ENCODE measurements at regions of chr1 and their contacts with region 1.

Region 1: GRCh38 chr1:27102707-27103491 is 52.0 kb downstream of the SLC9A1 start:
- DNase-seq: peak; percentile 87
- H3K4me3 Mint-ChIP-seq: no peak overlapping the region
- H3K27ac Mint-ChIP-seq: no peak overlapping the region
- H3K4me1 Mint-ChIP-seq: peaks cover 15% of the 10 kb centered on the region
- H3K27me3 Mint-ChIP-seq: no peaks in the 10 kb centered on the region

Region 2: GRCh38 chr1:27192039-27192529 is 89.2 kb after region 1 on chr1:
- CTCF ChIA-PET with region 1: interaction called, 51 read pairs
- POLR2A ChIA-PET with region 1: no interaction called
- intact Hi-C with region 1: no loop called
- DNase-seq: no peak
- H3K4me3 Mint-ChIP-seq: no peak overlapping the region
- H3K27ac Mint-ChIP-seq: no peak overlapping the region
- H3K4me1 Mint-ChIP-seq: no peaks in the 10 kb centered on the region
- H3K27me3 Mint-ChIP-seq: no peaks in the 10 kb centered on the region

Region 3: GRCh38 chr1:27201295-27201694 is 98.4 kb after region 1 on chr1:
- CTCF ChIA-PET with region 1: interaction called, 51 read pairs
- POLR2A ChIA-PET with region 1: no interaction called
- intact Hi-C with region 1: loop called (anchors 1 kb)
- DNase-seq: no peak
- H3K4me3 Mint-ChIP-seq: no peak overlapping the region
- H3K27ac Mint-ChIP-seq: no peak overlapping the region
- H3K4me1 Mint-ChIP-seq: peaks cover 4% of the 10 kb centered on the region
- H3K27me3 Mint-ChIP-seq: no peaks in the 10 kb centered on the region

Measured in activated CD4-positive, alpha-beta memory T cell treated with anti-CD3 and anti-CD28 coated beads for 36 hours (primary cell).